Heart right ventricle (tissue), 16 donors: ENCODE measurements at regions of chr10 and their contacts with region 1.

Region 1: GRCh38 chr10:112955582-112956421 is 5.8 kb downstream of the TCF7L2 start:
- DNase-seq: no peak
- ATAC-seq: peak in 1 of 8 donors; percentile 23
- H3K4me3 ChIP-seq: peak overlapping the region in 9 of 10 donors; percentile 6 to 81 (median 34)
- H3K27ac ChIP-seq: peak overlapping the region in 8 of 10 donors; percentile 27 to 66 (median 53)
- H3K4me1 ChIP-seq: peaks cover 9 to 75% (median 60%) of the 10 kb centered on the region in 9 donors
- H3K27me3 ChIP-seq: peaks cover 0 to 26% (median 0%) of the 10 kb centered on the region in 7 donors
- CTCF ChIP-seq: no peak

Region 2: GRCh38 chr10:112278871-112279270 is 676.9 kb before region 1 on chr10:
- intact Hi-C with region 1: no loop called
- DNase-seq: no peak
- ATAC-seq: no peak
- H3K4me3 ChIP-seq: no peak overlapping the region
- H3K27ac ChIP-seq: no peak overlapping the region
- H3K4me1 ChIP-seq: no peaks in the 10 kb centered on the region
- H3K27me3 ChIP-seq: peaks cover 0 to 4% (median 0%) of the 10 kb centered on the region in 7 donors
- CTCF ChIP-seq: no peak

Region 3: DNA sequence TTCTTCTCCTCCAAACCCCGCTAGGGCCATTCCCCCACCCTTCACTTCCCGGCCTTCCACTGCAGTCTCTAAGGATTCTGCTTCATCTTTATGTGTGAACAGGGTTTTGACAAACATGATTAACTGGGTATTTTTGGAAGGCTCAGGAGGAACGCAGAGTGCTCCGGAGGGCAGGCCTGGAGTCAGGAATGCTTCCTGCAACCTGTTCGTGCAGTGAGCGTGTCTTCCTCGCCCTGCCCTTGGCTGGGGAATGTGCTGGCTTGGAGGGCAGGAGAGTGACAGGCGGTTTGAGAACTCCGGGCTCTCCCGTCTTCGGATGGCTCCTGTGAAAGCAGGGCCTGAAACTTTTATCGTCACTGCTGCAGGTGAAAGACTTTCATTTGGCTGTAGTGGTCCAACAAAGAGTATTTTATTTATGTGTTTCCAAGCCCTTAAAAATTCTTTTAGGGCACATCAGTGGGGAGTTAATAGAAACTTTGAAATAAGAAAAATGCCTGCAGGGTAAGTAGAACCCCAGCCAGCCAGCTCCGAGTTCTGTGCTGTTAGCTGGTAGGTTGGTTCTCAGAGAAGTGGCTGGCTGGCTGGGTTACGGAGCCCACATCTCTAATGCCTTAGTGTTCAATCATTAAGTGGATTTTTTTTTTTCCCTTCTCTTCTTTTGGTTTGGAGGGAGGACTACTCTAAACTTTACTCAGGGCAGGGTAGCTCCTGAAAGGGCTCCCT is 45.2 kb after region 1 on chr10:
- intact Hi-C with region 1: loop called in 2 of 10 experiments (anchors 5 kb)
- DNase-seq: peak in 1 of 2 donors; percentile 35
- ATAC-seq: peak in 7 of 8 donors; percentile 62 to 89 (median 80)
- H3K4me3 ChIP-seq: no peak overlapping the region
- H3K27ac ChIP-seq: peak overlapping the region in 7 of 10 donors; percentile 8 to 58 (median 39)
- H3K4me1 ChIP-seq: peaks cover 9 to 81% (median 37%) of the 10 kb centered on the region in 9 donors
- H3K27me3 ChIP-seq: no peaks in the 10 kb centered on the region
- CTCF ChIP-seq: peak in 4 of 9 donors; percentile 18 to 33 (median 27)

Region 4: GRCh38 chr10:113015201-113015600 is 59.4 kb after region 1 on chr10:
- intact Hi-C with region 1: no loop called
- DNase-seq: no peak
- ATAC-seq: no peak
- H3K4me3 ChIP-seq: no peak overlapping the region
- H3K27ac ChIP-seq: no peak overlapping the region
- H3K4me1 ChIP-seq: peaks cover 0 to 57% (median 36%) of the 10 kb centered on the region in 9 donors
- H3K27me3 ChIP-seq: no peaks in the 10 kb centered on the region
- CTCF ChIP-seq: no peak

Region 5: DNA sequence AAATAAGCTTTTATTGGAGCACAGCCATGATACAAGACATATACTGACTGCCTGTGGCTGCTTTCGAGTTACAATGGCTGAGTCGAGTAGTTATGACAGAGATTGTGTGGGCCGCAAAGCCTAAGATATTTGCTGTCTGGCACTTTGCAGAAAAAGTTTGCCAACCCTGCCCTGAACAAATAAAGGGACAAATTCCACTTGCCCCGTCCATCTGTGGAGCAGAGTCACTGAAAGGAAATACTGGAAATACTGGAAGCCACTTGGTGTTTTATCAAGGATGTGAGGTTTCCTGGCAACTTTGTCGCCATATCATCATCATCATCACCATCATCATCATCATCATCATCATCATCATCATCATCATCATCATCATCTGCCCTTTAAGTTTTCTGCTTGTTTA is 80.0 kb after region 1 on chr10:
- intact Hi-C with region 1: no loop called
- DNase-seq: no peak
- ATAC-seq: peak in 3 of 8 donors; percentile 23 to 50 (median 34)
- H3K4me3 ChIP-seq: no peak overlapping the region
- H3K27ac ChIP-seq: peak overlapping the region in 1 of 10 donors; percentile 48
- H3K4me1 ChIP-seq: peaks cover 0 to 40% (median 8%) of the 10 kb centered on the region in 9 donors
- H3K27me3 ChIP-seq: no peaks in the 10 kb centered on the region
- CTCF ChIP-seq: no peak

Region 6: DNA sequence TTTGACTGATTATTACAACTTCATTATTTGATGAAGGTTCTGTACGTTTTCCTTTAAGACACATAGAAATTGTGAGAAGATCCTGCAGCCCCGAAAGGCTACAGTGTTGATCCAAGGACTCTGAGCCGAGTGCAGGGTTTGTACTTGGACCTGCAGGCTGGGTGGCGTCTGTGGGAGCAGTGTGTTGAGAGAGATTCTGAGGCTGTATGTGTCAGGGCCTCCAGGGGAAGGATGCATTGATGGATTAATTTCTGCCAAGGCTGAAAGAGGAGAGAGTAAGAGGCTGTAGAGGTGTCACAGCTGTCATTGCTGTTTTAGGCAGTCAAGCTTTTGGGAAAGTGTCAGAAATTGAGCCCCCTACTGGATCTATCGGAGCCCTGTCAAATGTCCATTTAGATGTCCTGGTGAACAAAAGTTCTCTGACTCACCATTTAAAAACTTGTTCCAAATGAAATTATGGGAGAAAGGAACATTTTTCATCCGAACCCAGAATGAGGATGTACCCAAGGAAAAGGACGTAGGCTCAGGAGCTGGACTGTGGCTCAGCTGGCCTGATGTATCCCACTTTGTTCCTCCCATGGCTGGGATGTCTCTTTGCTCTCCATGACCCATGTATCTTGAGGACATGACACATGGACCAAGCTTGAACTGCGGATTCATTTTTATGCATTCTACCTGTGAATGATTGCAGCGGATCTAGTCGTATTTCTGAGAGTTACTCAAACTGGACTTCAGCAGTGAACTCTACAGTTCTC is 96.5 kb after region 1 on chr10:
- intact Hi-C with region 1: loop called in 4 of 10 experiments (anchors 5 to 10 kb)
- DNase-seq: no peak
- ATAC-seq: peak in 4 of 8 donors; percentile 2 to 41 (median 26)
- H3K4me3 ChIP-seq: no peak overlapping the region
- H3K27ac ChIP-seq: peak overlapping the region in 1 of 10 donors; percentile 1
- H3K4me1 ChIP-seq: peaks cover 0 to 78% (median 45%) of the 10 kb centered on the region in 9 donors
- H3K27me3 ChIP-seq: no peaks in the 10 kb centered on the region
- CTCF ChIP-seq: peak in 8 of 9 donors; percentile 14 to 46 (median 26)